ENCODE measurements at regions of chr5 and their contacts with region 1.

Region 1: DNA sequence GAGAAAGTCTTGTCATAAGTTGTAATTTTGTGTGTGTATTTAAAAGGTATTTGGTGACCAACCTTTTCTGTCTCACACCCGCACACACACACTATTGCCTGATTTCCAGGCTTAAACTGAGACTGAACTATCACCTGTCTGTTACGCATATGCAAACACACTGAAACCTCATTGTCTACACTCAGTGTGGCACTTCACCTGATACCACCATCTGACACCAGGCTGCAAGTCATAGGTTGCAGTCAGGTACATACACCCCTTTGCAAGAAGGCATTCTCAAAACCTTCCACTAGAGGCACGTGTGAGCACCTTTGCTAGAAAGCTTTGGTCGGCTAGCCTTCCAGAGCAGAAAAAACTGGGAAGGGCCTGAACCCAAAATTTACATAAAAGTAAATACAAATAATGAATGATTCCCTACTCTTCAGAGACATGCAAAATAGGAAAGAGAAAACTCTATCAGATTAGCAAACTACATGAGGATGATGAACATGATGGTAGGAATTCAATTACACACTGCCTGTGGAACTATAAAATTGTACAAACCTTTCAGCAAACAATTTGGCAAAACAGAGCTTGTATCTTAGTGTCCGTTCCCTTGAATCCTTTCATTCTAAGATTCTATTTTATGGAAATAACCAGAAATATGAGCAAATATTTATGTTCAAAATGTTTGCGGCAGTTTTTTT is 5.9 kb upstream of the FOXD1 start:
- DNase-seq: peak in 1 of 3 donors; percentile 74
- ATAC-seq: peak; percentile 86
- H3K4me3 ChIP-seq: no peak overlapping the region
- H3K4me1 ChIP-seq: peaks cover 9% of the 10 kb centered on the region
- CTCF ChIP-seq: peak; percentile 77

Region 2: GRCh38 chr5:73135429-73136054 is 319.0 kb before region 1 on chr5:
- intact Hi-C with region 1: no loop called
- DNase-seq: no peak
- ATAC-seq: peak; percentile 24
- H3K4me3 ChIP-seq: no peak overlapping the region
- H3K4me1 ChIP-seq: peaks cover 23% of the 10 kb centered on the region
- CTCF ChIP-seq: no peak

Region 3: GRCh38 chr5:73222173-73222572 is 232.3 kb before region 1 on chr5:
- intact Hi-C with region 1: loop called (anchors 5 kb)
- DNase-seq: no peak
- ATAC-seq: peak; percentile 58
- H3K4me3 ChIP-seq: no peak overlapping the region
- H3K4me1 ChIP-seq: no peaks in the 10 kb centered on the region
- CTCF ChIP-seq: no peak

Region 4: DNA sequence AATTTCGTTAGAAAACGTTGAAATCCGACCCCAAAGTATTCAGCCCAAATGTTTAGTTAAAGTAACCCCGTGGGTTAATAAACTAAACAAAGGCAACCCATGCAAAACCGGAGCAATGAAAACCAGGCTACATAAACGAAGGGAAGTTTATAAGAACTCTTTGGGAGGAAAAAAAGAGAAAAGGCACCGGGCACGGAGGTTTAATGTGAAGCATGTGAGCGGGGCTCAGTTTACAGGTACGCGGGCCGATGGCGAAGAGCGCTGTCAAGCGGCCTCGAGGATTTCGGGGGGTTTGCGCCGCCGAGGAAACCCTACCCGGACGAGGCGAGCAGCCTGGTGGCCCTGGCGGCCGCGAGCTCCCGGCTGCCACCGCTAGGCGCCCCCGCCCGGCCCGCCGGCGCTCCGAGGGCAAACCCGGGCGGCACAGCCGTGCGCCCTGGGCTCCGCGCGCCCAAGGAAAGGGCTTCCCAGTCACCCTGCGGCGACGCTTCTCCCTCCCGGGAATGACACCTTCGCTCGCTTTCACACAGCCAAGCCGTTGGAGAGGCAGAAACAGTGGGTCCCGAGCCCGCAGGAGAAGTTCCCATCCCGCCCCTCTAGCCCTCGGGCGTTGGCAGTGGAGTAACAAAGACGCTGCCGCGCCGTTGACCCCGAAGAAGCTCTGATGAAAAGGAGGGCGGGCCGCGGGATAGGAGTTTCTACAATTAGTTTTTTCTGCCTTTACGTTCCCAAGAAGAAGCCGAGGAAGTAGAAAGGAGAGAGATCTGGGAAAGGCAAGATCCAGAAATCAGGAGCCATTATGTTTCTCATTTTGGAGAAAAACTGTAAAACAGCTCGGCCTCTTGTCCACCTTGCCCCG is 155.5 kb before region 1 on chr5:
- intact Hi-C with region 1: loop called in 1 of 2 experiments (anchors 10 kb)
- DNase-seq: peak in 2 of 3 donors; percentile 12 to 46
- ATAC-seq: peak; percentile 70
- H3K4me3 ChIP-seq: no peak overlapping the region
- H3K4me1 ChIP-seq: peaks cover 7% of the 10 kb centered on the region
- CTCF ChIP-seq: peak; percentile 20

Region 5: GRCh38 chr5:73344835-73345234 is 109.7 kb before region 1 on chr5:
- intact Hi-C with region 1: no loop called
- DNase-seq: no peak
- ATAC-seq: no peak
- H3K4me3 ChIP-seq: no peak overlapping the region
- H3K4me1 ChIP-seq: no peaks in the 10 kb centered on the region
- CTCF ChIP-seq: no peak

Measured in mucosa of descending colon (tissue), 3 donors.